Naive thymus-derived CD4-positive, alpha-beta T cell (primary cell): ENCODE measurements at regions of chr17 and their contacts with region 1.

Region 1: DNA sequence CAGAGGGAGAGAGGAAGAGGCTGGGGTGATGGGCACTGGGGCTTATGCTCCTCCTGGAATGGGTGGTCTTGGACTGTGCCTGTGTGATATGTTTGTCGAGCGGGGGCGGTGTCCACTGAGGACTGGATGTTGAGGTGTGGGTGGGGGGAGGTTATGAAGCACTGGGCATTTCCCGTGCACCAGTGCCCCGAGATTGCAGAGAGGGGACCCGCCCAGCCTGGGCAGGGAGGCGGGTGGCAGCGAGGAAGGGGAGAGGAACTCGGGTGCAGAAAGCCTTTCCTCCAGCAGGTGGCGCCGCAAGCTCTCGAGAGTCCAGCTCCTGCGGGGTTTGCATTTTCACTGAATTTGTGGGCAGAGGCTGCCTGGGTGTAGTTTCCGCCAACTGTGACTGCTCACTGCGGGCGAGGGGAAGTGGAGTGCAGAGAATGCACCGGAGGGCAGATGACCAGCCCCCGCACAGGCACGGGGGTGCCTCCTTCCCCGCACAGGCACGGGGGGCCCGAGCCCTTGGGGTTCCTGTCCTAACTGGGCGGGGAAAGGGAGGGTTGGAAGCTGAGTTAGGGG is 190.6 kb downstream of the SEC14L1 start:
- DNase-seq: peak; percentile 88 to 98 (median 93)
- ATAC-seq: peak; percentile 95
- H3K4me3 ChIP-seq: peak overlapping the region; percentile 10
- H3K4me3 Mint-ChIP-seq: peak overlapping the region; percentile 78 to 91 (median 84)
- H3K27ac ChIP-seq: peak overlapping the region; percentile 66
- H3K27ac Mint-ChIP-seq: peak overlapping the region; percentile 70 to 98 (median 91)
- H3K4me1 ChIP-seq: peaks cover 29% of the 10 kb centered on the region in 2 donors
- H3K4me1 Mint-ChIP-seq: peaks cover 37 to 55% (median 48%) of the 10 kb centered on the region in 7 donors
- H3K27me3 ChIP-seq: no peaks in the 10 kb centered on the region
- H3K27me3 Mint-ChIP-seq: no peaks in the 10 kb centered on the region

Region 2: DNA sequence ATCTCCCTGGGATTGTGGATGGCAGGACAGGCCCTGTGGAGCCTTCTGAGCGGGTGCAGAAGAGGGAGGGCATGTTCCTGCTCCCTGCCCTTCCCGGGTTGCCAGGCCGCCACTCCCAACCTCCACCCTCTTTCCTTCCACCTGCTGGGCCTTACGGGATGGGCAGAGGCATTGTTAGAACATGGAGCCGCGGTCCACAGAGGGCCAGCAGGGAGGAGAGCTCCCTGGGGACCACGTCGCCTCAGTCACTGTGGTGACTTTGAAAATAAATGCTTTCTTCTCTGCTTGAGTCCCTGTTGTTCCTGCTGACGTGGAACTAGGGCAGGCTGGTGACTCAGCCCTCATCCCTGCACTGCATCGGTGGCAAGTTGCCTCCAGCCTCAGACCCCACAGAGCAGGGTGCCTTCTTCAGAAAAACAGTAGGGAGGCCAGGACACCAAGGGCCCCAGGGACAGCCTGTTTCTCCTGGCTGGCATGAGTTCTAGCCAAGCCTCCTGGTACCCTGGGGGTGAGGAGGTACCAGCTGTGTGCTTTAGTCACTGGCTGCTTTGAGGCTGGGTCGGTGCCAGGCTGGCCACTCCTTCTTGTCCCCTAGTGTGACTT is 34.3 kb after region 1 on chr17:
- CTCF ChIA-PET with region 1: interaction called, 4 read pairs
- POLR2A ChIA-PET with region 1: interaction called, 9 read pairs
- intact Hi-C with region 1: loop called in 1 of 2 experiments (anchors 2 kb)
- DNase-seq: no peak
- ATAC-seq: no peak
- H3K4me3 ChIP-seq: no peak overlapping the region
- H3K4me3 Mint-ChIP-seq: peak overlapping the region in 5 of 10 donors; percentile 73 to 86 (median 78)
- H3K27ac ChIP-seq: no peak overlapping the region
- H3K27ac Mint-ChIP-seq: peak overlapping the region in 5 of 9 donors; percentile 15 to 92 (median 71)
- H3K4me1 ChIP-seq: peaks cover 4 to 65% of the 10 kb centered on the region in 2 donors
- H3K4me1 Mint-ChIP-seq: peaks cover 42 to 80% (median 55%) of the 10 kb centered on the region in 7 donors
- H3K27me3 ChIP-seq: no peaks in the 10 kb centered on the region
- H3K27me3 Mint-ChIP-seq: peaks cover 0 to 11% (median 0%) of the 10 kb centered on the region in 5 donors

Region 3: GRCh38 chr17:77404812-77405581 is 73.6 kb after region 1 on chr17:
- CTCF ChIA-PET with region 1: interaction called, 35 read pairs
- POLR2A ChIA-PET with region 1: interaction called, 39 read pairs
- intact Hi-C with region 1: loop called in 1 of 2 experiments (anchors 1 kb)
- DNase-seq: peak; percentile 48 to 86 (median 84)
- ATAC-seq: peak; percentile 88
- H3K4me3 ChIP-seq: peak overlapping the region; percentile 66
- H3K4me3 Mint-ChIP-seq: peak overlapping the region; percentile 83 to 100 (median 95)
- H3K27ac ChIP-seq: peak overlapping the region; percentile 81
- H3K27ac Mint-ChIP-seq: peak overlapping the region; percentile 95 to 100 (median 97)
- H3K4me1 ChIP-seq: peaks cover 89 to 91% of the 10 kb centered on the region in 2 donors
- H3K4me1 Mint-ChIP-seq: peaks cover 71 to 97% (median 87%) of the 10 kb centered on the region in 7 donors
- H3K27me3 ChIP-seq: no peaks in the 10 kb centered on the region
- H3K27me3 Mint-ChIP-seq: no peaks in the 10 kb centered on the region

Region 4: DNA sequence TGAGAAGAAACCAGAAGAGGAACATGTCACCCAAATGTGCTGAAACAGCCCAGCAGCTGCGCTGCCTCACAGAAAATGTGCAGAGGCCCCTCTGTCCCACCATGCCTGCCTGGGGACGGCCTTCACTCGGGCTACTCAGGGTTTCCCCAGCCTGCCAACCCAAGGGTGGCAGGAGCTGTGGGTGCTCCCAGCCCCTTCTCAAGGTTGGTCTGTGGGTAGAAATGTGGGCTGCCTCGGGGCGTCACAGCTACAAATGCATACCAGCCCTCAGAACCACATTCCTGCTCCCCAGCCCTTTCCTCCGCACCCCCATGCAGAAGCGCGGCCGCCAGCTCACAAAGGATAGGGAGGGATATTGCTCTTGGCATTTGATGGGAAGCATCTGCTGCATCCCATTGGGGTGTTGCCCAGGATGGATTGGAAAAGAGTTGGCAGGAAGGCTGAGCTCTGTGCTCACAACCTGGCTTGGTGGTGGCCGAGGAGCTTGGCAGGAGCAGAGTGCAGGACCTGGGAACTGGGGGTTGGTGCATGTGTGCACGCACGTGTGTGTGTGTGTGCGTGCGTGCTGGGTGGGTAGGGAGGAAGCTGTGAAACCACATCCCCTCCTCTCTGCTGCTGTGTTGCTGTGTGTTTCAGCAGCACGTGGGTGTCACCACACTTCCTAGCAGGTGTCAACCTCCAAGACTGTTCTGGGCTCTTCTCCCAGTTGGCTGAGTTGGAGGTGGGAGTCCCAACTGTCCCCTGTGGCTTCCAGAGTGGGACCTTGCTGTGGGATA is 113.8 kb after region 1 on chr17:
- CTCF ChIA-PET with region 1: interaction called, 10 read pairs
- POLR2A ChIA-PET with region 1: interaction called, 22 read pairs
- intact Hi-C with region 1: loop called (anchors 1 to 5 kb)
- DNase-seq: peak; percentile 68 to 96 (median 94)
- ATAC-seq: peak; percentile 84
- H3K4me3 ChIP-seq: peak overlapping the region; percentile 57
- H3K4me3 Mint-ChIP-seq: peak overlapping the region; percentile 77 to 98 (median 86)
- H3K27ac ChIP-seq: peak overlapping the region; percentile 92
- H3K27ac Mint-ChIP-seq: peak overlapping the region; percentile 93 to 100 (median 99)
- H3K4me1 ChIP-seq: peaks cover 90 to 91% of the 10 kb centered on the region in 2 donors
- H3K4me1 Mint-ChIP-seq: peaks cover 73 to 99% (median 93%) of the 10 kb centered on the region in 7 donors
- H3K27me3 ChIP-seq: no peaks in the 10 kb centered on the region
- H3K27me3 Mint-ChIP-seq: no peaks in the 10 kb centered on the region

Region 5: GRCh38 chr17:77494664-77495435 is 163.5 kb after region 1 on chr17:
- CTCF ChIA-PET with region 1: interaction called, 39 read pairs
- POLR2A ChIA-PET with region 1: interaction called, 15 read pairs
- intact Hi-C with region 1: loop called (anchors 1 kb)
- DNase-seq: peak; percentile 60 to 82 (median 70)
- ATAC-seq: peak; percentile 90
- H3K4me3 ChIP-seq: no peak overlapping the region
- H3K4me3 Mint-ChIP-seq: peak overlapping the region in 6 of 10 donors; percentile 19 to 54 (median 44)
- H3K27ac ChIP-seq: peak overlapping the region; percentile 27
- H3K27ac Mint-ChIP-seq: peak overlapping the region; percentile 71 to 94 (median 91)
- H3K4me1 ChIP-seq: peaks cover 11 to 21% of the 10 kb centered on the region in 2 donors
- H3K4me1 Mint-ChIP-seq: peaks cover 5 to 37% (median 20%) of the 10 kb centered on the region in 7 donors
- H3K27me3 ChIP-seq: no peaks in the 10 kb centered on the region
- H3K27me3 Mint-ChIP-seq: no peaks in the 10 kb centered on the region